PC-9 (cell line): ENCODE measurements at regions of chr6 and their contacts with region 1.

Region 1: GRCh38 chr6:56542364-56543331 is 100.0 kb downstream of the DST start:
- DNase-seq: peak; percentile 91 to 93
- H3K4me3 ChIP-seq: peak overlapping the region; percentile 62
- H3K27ac ChIP-seq: peak overlapping the region; percentile 87
- H3K4me1 ChIP-seq: peaks cover 26% of the 10 kb centered on the region
- H3K27me3 ChIP-seq: no peaks in the 10 kb centered on the region
- CTCF ChIP-seq: 0 out of 2 replicates have a peak, but pooled peaks have one; percentile 16

Region 2: GRCh38 chr6:56510984-56511531 is 31.6 kb before region 1 on chr6:
- CTCF ChIA-PET with region 1: no interaction called
- POLR2A ChIA-PET with region 1: no interaction called
- intact Hi-C with region 1: no loop called
- DNase-seq: no peak
- H3K4me3 ChIP-seq: no peak overlapping the region
- H3K27ac ChIP-seq: no peak overlapping the region
- H3K4me1 ChIP-seq: no peaks in the 10 kb centered on the region
- H3K27me3 ChIP-seq: no peaks in the 10 kb centered on the region
- CTCF ChIP-seq: no peak

Region 3: DNA sequence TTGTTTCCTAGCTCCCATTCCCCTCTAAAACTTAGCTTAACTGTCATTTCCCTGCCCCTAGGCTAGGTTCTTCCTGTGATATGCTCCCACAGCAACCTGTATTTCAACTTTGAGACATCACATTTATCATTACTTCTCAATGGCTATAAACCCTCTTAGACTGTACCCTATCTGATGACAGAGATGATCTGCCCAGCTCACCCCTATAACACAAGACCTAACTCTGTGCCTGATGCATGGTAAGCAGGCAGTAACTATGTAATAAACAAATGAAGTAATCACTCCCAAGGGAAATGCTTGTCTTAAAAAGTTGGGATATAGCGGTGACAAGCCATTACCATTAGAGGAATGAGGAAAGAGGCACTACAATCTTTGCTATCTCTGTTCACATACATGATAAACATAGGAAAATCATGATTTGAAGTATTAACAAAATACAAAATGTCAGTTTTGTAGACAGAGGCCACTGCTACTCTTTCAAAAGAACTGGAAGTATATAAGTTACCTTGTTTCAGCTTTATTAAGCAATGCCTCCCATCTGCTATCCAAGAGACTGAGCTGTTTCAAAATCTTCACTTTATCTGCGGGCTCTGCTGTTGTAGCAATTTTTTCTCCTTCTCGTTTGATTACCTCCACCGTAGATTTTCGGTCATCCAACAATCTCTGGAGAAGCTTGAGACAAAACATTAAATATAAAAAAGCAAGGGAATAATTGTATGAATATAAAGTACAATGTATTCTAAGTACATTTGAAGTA is 10.6 kb before region 1 on chr6:
- CTCF ChIA-PET with region 1: interaction called, 4 read pairs
- POLR2A ChIA-PET with region 1: interaction called, 15 read pairs
- intact Hi-C with region 1: no loop called
- DNase-seq: no peak
- H3K4me3 ChIP-seq: no peak overlapping the region
- H3K27ac ChIP-seq: no peak overlapping the region
- H3K4me1 ChIP-seq: no peaks in the 10 kb centered on the region
- H3K27me3 ChIP-seq: no peaks in the 10 kb centered on the region
- CTCF ChIP-seq: no peak

Region 4: DNA sequence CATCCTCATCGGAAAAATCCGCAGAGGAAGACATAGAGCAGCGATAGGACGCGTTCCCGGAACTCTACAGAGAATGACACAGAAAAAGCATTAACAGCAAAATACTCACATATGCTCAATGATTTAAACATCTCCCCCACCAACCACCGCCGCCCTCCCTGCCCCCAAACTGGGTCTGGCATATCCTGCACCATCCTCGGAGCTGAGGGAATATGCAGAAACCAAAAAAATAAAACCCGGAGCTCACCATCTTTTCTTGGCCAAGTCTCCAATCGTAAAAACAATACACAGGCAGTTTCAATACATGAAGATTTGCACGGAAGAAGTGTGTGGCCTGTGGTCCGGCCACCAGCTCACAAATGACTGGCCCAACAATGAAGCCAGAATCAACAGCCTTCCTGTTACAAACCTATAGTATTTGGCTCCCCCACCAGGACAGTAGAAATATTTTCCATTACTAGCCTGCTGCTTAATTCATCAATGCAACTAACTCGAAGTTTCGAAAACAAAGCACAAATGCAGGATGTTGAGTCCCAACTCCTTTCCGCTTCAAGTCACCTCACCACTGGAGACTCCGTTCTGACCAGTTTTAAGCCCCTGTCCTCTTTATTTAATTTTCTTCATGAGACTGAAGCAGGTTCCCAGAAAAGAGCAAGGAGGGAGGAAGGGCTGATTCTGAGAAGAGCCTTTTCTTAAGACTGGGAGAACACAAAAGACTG is 309.1 kb after region 1 on chr6:
- CTCF ChIA-PET with region 1: interaction called, 11 read pairs
- POLR2A ChIA-PET with region 1: no interaction called
- intact Hi-C with region 1: no loop called
- DNase-seq: peak; percentile 28 to 73
- H3K4me3 ChIP-seq: peak overlapping the region; percentile 75
- H3K27ac ChIP-seq: peak overlapping the region; percentile 88
- H3K4me1 ChIP-seq: peaks cover 43% of the 10 kb centered on the region
- H3K27me3 ChIP-seq: no peaks in the 10 kb centered on the region
- CTCF ChIP-seq: peak; percentile 76

Region 5: GRCh38 chr6:56868687-56869086 is 326.0 kb after region 1 on chr6:
- CTCF ChIA-PET with region 1: no interaction called
- POLR2A ChIA-PET with region 1: interaction called, 13 read pairs
- intact Hi-C with region 1: no loop called
- DNase-seq: peak in 1 of 2 experiments; percentile 90
- H3K4me3 ChIP-seq: 0 out of 2 replicates have a peak overlapping the region, but pooled peaks have one; percentile 10
- H3K27ac ChIP-seq: peak overlapping the region; percentile 85
- H3K4me1 ChIP-seq: peaks cover 66% of the 10 kb centered on the region
- H3K27me3 ChIP-seq: no peaks in the 10 kb centered on the region
- CTCF ChIP-seq: no peak

Region 6: GRCh38 chr6:57075092-57075491 is 532.4 kb after region 1 on chr6:
- CTCF ChIA-PET with region 1: no interaction called
- POLR2A ChIA-PET with region 1: no interaction called
- intact Hi-C with region 1: no loop called
- DNase-seq: no peak
- H3K4me3 ChIP-seq: no peak overlapping the region
- H3K27ac ChIP-seq: no peak overlapping the region
- H3K4me1 ChIP-seq: no peaks in the 10 kb centered on the region
- H3K27me3 ChIP-seq: no peaks in the 10 kb centered on the region
- CTCF ChIP-seq: no peak